Right cardiac atrium (tissue), 5 donors: ENCODE measurements at regions of chr17 and their contacts with region 1.

Region 1: GRCh38 chr17:40909351-40909750 is 24.3 kb upstream of the KRT20 start:
- DNase-seq: peak; percentile 70 to 84 (median 78)
- ATAC-seq: peak; percentile 94 to 96
- H3K4me3 ChIP-seq: no peak overlapping the region
- H3K27ac ChIP-seq: no peak overlapping the region
- H3K4me1 ChIP-seq: no peaks in the 10 kb centered on the region
- H3K27me3 ChIP-seq: no peaks in the 10 kb centered on the region

Region 2: GRCh38 chr17:41648411-41649195 is 739.3 kb after region 1 on chr17:
- intact Hi-C with region 1: loop called in 2 of 4 experiments (anchors 5 kb)
- DNase-seq: peak; percentile 86 to 95 (median 94)
- ATAC-seq: peak; percentile 94 to 96
- H3K4me3 ChIP-seq: no peak overlapping the region
- H3K27ac ChIP-seq: no peak overlapping the region
- H3K4me1 ChIP-seq: peaks cover 3% of the 10 kb centered on the region
- H3K27me3 ChIP-seq: no peaks in the 10 kb centered on the region